CD8-positive, alpha-beta memory T cell (primary cell): ENCODE measurements at regions of chr19 and their contacts with region 1.

Region 1: GRCh38 chr19:19385108-19385899 is 20.2 kb upstream of the GATAD2A start:
- DNase-seq: peak in 4 of 5 donors; percentile 98 to 100 (median 99)
- H3K4me3 ChIP-seq: peak overlapping the region; percentile 74
- H3K4me3 Mint-ChIP-seq: peak overlapping the region; percentile 86 to 96 (median 92)
- H3K27ac ChIP-seq: peak overlapping the region; percentile 90
- H3K27ac Mint-ChIP-seq: peak overlapping the region; percentile 84 to 96 (median 92)
- H3K4me1 ChIP-seq: peaks cover 47% of the 10 kb centered on the region
- H3K4me1 Mint-ChIP-seq: peaks cover 39 to 40% (median 40%) of the 10 kb centered on the region in 3 donors
- H3K27me3 ChIP-seq: no peaks in the 10 kb centered on the region
- H3K27me3 Mint-ChIP-seq: no peaks in the 10 kb centered on the region

Region 2: GRCh38 chr19:19372656-19373416 is 12.5 kb before region 1 on chr19:
- CTCF ChIA-PET with region 1: no interaction called
- POLR2A ChIA-PET with region 1: interaction called, 15 read pairs
- DNase-seq: peak in 3 of 5 donors; percentile 27 to 64 (median 32)
- H3K4me3 ChIP-seq: peak overlapping the region; percentile 40
- H3K4me3 Mint-ChIP-seq: peak overlapping the region in 6 of 7 donors; percentile 12 to 68 (median 53)
- H3K27ac ChIP-seq: peak overlapping the region; percentile 64
- H3K27ac Mint-ChIP-seq: peak overlapping the region; percentile 61 to 95 (median 86)
- H3K4me1 ChIP-seq: peaks cover 13% of the 10 kb centered on the region
- H3K4me1 Mint-ChIP-seq: peaks cover 9% of the 10 kb centered on the region in 3 donors
- H3K27me3 ChIP-seq: no peaks in the 10 kb centered on the region
- H3K27me3 Mint-ChIP-seq: no peaks in the 10 kb centered on the region